Posterior cingulate gyrus (tissue), 11 donors: ENCODE measurements at regions of chr19 and their contacts with region 1.

Region 1: GRCh38 chr19:57279418-57280066 is 743 bp upstream of the ZNF460 start:
- DNase-seq: peak; percentile 75 to 98 (median 88)

Region 2: DNA sequence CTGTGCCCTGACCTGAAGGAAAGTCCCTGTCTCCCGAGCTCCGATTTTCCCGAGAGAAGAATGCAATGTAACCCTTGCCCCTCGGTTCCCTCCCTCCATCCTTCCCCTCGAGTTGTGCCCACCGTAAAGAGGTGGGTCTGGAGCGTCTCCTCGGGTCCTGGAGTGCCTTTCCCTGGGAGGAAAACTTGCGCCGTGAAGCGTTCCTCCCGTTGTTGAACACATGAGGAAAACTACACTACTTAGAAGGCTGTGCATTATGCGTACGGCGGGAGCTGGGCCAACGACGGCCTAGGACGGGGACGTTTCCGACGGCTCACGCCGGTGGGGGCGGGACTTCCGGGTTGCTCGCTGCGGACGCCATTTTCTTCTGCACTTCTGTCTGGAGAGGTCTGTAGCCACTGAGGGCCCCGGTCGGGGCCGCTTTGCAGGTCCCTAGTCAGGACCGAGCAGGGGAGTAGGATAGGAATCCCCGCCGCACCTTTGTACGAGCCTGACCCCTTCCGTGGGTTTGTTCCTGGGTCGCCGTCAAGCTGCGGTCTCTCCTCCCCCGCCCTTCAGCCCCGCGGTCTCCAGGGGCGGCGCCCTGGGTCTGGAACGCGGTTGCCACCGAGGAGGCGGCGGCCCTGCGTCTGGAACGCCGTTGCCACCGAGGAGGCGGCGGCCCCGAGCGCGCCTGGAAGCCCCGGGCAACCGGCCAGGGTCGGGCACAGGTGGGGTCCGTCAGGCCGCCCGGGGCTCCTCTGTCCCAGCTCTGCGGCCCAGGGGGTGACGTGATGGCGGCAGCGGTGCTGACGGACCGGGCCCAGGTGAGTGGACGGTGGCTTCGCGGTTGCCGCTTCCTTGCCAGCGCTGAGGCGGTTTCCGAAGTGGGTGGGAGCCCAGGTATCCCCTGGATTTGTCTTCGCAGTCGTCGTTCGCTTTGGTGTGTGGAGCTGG is 88.1 kb before region 1 on chr19 and contains the start of gene ZNF264:
- intact Hi-C with region 1: loop called (anchors 5 kb)
- DNase-seq: peak; percentile 86 to 98 (median 93)

Region 3: GRCh38 chr19:57240311-57241090 is 39.0 kb before region 1 on chr19 and contains the start of gene ZNF805:
- intact Hi-C with region 1: loop called (anchors 1 kb)
- DNase-seq: peak; percentile 91 to 99 (median 96)

Region 4: DNA sequence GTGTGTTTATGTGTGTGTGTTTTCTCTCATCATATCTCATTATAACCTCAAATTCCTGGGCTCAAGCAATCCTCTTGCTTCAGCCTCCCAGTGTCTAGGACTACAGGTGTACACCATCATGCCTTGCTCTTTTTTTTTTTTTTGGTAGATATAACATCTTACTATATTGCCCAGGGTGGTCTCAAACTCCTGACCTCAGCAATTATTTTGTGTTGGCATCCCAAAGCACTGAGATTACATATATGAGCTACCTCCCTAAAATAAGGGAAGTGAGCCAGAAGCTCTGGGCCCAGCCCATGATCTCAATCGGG is 40.3 kb after region 1 on chr19:
- intact Hi-C with region 1: loop called (anchors 5 kb)
- DNase-seq: no peak

Region 5: GRCh38 chr19:57350877-57351805 is 71.6 kb after region 1 on chr19 and contains the start of gene ZNF304:
- intact Hi-C with region 1: loop called (anchors 5 kb)
- DNase-seq: peak; percentile 92 to 100 (median 96)